ENCODE measurements at regions of chr1 and their contacts with region 1.

Region 1: GRCh38 chr1:28830814-28831213 is 18.8 kb downstream of the OPRD1 start:
- DNase-seq: no peak
- ATAC-seq: no peak
- H3K4me3 ChIP-seq: no peak overlapping the region
- H3K27ac ChIP-seq: no peak overlapping the region
- H3K4me1 ChIP-seq: peaks cover 2% of the 10 kb centered on the region; the same call in 1 of the 2 replicates
- H3K27me3 ChIP-seq: peaks cover 10% of the 10 kb centered on the region
- CTCF ChIP-seq: no peak
- POLR2A ChIP-seq: no peak
- RAD21 ChIP-seq: no peak

Region 2: DNA sequence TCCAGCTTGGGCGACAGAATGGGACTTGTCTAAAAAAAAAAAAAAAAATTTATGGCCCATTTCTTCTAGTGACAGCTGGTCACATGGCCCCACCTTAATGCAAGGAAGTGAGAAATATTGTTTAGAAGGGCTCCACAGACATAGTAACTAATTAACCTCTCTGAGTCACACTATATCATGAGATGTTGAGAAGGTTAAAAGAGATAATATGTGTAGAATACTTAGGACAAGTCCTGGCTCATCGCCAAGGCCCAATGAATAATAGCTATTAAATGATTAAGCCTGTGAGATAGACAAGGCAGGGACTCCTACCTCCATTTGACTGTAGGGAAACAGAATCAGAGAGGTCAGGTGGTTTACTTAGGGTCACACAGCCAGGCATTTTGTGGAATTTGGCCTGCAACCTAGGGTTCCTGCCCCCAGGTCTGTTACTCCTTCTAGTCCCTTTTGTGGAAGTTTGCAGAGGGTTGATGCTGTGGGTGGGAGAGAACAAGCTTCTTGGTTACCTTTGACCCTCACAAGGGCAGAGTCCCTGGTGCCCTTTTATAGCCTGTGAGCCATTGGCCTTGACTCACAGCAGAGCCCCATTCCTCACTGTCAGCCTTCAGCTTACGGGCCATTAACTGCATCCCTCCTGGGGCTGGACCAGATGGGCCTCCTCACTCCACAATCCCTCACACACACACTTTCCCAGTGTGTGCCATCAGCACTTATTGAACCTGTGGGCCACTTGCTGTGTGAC is 29.7 kb after region 1 on chr1:
- CTCF ChIA-PET with region 1: no interaction called
- POLR2A ChIA-PET with region 1: interaction called, 22 read pairs
- dilution Hi-C with region 1: no loop called
- in situ Hi-C with region 1: no loop called
- intact Hi-C with region 1: no loop called
- DNase-seq: no peak
- ATAC-seq: no peak
- H3K4me3 ChIP-seq: no peak overlapping the region
- H3K27ac ChIP-seq: no peak overlapping the region
- H3K4me1 ChIP-seq: no peaks in the 10 kb centered on the region
- H3K27me3 ChIP-seq: peaks cover 35% of the 10 kb centered on the region
- CTCF ChIP-seq: no peak
- POLR2A ChIP-seq: no peak
- RAD21 ChIP-seq: no peak

Region 3: GRCh38 chr1:28983509-28984310 is 152.9 kb after region 1 on chr1:
- CTCF ChIA-PET with region 1: no interaction called
- POLR2A ChIA-PET with region 1: interaction called, 12 read pairs
- dilution Hi-C with region 1: no loop called
- in situ Hi-C with region 1: no loop called
- intact Hi-C with region 1: no loop called
- DNase-seq: no peak
- ATAC-seq: no peak
- H3K4me3 ChIP-seq: no peak overlapping the region
- H3K27ac ChIP-seq: no peak overlapping the region
- H3K4me1 ChIP-seq: no peaks in the 10 kb centered on the region
- H3K27me3 ChIP-seq: no peaks in the 10 kb centered on the region
- CTCF ChIP-seq: no peak
- POLR2A ChIP-seq: no peak
- RAD21 ChIP-seq: no peak

Measured in IMR-90 (cell line).